Dorsolateral prefrontal cortex (tissue), 120 donors: ENCODE measurements at regions of chr6 and their contacts with region 1.

Region 1: DNA sequence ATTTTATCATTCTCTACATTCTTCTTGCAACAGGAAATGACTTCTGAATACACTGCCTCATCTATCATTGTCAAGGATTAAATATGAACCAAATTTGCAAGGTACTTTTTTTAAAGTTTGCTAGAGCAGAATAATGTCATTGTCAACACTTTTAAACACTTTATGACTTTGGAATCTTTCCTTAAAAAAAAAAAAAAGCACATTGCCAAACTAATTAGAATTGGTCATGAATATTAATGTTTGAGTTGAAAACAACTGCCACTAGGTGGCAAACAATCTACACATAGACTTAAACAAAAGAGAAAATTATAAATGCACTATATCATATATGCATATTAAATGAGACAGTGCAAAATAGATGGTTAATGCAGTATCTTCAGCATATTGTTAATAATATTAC is 32.5 kb upstream of the TMEM244 start:
- DNase-seq: no peak
- H3K4me3 ChIP-seq: no peak overlapping the region
- H3K27ac ChIP-seq: no peak overlapping the region
- H3K27me3 ChIP-seq: no peaks in the 10 kb centered on the region
- CTCF ChIP-seq: peak in 55 of 56 donors; percentile 43 to 79 (median 61)

Region 2: GRCh38 chr6:129936329-129937165 is 42.9 kb after region 1 on chr6:
- intact Hi-C with region 1: loop called in 1 of 2 experiments (anchors 5 kb)
- DNase-seq: peak in 3 of 10 donors; percentile 17 to 52 (median 39)
- H3K4me3 ChIP-seq: peak overlapping the region in 14 of 59 donors; percentile 3 to 51 (median 22)
- H3K27ac ChIP-seq: no peak overlapping the region
- H3K27me3 ChIP-seq: peaks cover 0 to under 1% (median 0%) of the 10 kb centered on the region in 45 donors
- CTCF ChIP-seq: peak; percentile 32 to 81 (median 67)

Region 3: GRCh38 chr6:129946439-129947145 is 53.0 kb after region 1 on chr6:
- intact Hi-C with region 1: no loop called
- DNase-seq: no peak
- H3K4me3 ChIP-seq: no peak overlapping the region
- H3K27ac ChIP-seq: no peak overlapping the region
- H3K27me3 ChIP-seq: peaks cover 0 to 3% (median 0%) of the 10 kb centered on the region in 45 donors
- CTCF ChIP-seq: no peak

Region 4: GRCh38 chr6:130012728-130013127 is 119.1 kb after region 1 on chr6:
- intact Hi-C with region 1: no loop called
- DNase-seq: no peak
- H3K4me3 ChIP-seq: no peak overlapping the region
- H3K27ac ChIP-seq: no peak overlapping the region
- H3K27me3 ChIP-seq: no peaks in the 10 kb centered on the region
- CTCF ChIP-seq: no peak

Region 5: GRCh38 chr6:130730600-130730999 is 837.0 kb after region 1 on chr6:
- intact Hi-C with region 1: no loop called
- DNase-seq: no peak
- H3K4me3 ChIP-seq: no peak overlapping the region
- H3K27ac ChIP-seq: no peak overlapping the region
- H3K27me3 ChIP-seq: no peaks in the 10 kb centered on the region
- CTCF ChIP-seq: no peak